ENCODE measurements at regions of chr5 and their contacts with region 1.

Region 1: DNA sequence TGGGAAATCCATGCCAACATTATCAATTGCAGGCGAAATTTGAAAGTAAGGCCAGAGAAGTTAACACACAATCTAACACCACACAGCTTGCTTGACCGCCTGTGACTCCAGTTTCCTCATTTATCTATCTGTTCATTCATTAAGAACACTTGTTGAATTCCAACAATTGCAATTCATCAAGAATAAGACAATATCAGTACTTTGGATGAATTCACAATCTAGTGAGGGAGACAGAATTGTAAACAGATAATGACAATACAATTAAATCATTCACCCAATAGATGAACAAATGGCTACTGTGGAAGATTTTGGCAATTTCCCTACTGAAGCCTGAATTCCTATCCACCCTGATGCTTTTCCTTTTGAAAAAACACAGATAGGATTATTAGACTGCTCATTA is 181.6 kb downstream of the TRIM36 start:
- DNase-seq: no peak
- CTCF ChIP-seq: no peak

Region 2: DNA sequence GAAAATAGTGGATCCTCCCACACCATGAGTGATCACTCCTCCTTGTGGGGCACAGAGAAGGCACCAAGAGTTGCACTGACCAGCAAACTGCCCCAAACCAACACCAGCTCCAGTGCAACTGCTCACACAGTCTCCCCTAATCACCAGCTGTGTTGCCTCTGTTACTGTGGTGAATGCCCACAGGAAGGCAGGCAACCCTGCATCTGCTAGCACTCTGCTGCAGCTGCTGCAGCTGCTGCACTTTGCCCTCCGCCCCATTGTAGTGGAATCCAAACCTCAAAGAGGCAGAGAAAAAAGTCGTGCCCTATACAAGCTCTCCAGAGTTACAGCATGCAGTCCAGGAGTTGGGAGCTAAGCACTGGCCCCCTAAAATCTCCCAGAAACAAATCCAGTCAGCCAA is 158.0 kb before region 1 on chr5:
- CTCF ChIA-PET with region 1: no interaction called
- POLR2A ChIA-PET with region 1: no interaction called
- DNase-seq: no peak
- CTCF ChIP-seq: no peak

Region 3: GRCh38 chr5:114977979-114978573 is 10.0 kb before region 1 on chr5:
- CTCF ChIA-PET with region 1: no interaction called
- POLR2A ChIA-PET with region 1: no interaction called
- DNase-seq: no peak
- CTCF ChIP-seq: no peak

Region 4: GRCh38 chr5:114999176-114999575 is 11.1 kb after region 1 on chr5:
- CTCF ChIA-PET with region 1: interaction called, 11 read pairs
- POLR2A ChIA-PET with region 1: no interaction called
- DNase-seq: no peak
- CTCF ChIP-seq: no peak